ENCODE measurements at regions of chr7 and their contacts with region 1.

Region 1: GRCh38 chr7:24965831-24966709 is 13.9 kb downstream of the OSBPL3 start:
- DNase-seq: peak; percentile 98
- ATAC-seq: peak; percentile 78
- H3K4me3 ChIP-seq: peak overlapping the region; percentile 44; the same call in 1 of the 2 replicates
- H3K27ac ChIP-seq: peak overlapping the region; percentile 82
- H3K4me1 ChIP-seq: peaks cover 65% of the 10 kb centered on the region
- H3K27me3 ChIP-seq: no peaks in the 10 kb centered on the region
- CTCF ChIP-seq: no peak
- EP300 ChIP-seq: peak; percentile 93 to 97
- POLR2A ChIP-seq: no peak; the same call in 1 of the 2 replicates
- RAD21 ChIP-seq: 0 out of 2 replicates have a peak, but pooled peaks have one; percentile 15

Region 2: DNA sequence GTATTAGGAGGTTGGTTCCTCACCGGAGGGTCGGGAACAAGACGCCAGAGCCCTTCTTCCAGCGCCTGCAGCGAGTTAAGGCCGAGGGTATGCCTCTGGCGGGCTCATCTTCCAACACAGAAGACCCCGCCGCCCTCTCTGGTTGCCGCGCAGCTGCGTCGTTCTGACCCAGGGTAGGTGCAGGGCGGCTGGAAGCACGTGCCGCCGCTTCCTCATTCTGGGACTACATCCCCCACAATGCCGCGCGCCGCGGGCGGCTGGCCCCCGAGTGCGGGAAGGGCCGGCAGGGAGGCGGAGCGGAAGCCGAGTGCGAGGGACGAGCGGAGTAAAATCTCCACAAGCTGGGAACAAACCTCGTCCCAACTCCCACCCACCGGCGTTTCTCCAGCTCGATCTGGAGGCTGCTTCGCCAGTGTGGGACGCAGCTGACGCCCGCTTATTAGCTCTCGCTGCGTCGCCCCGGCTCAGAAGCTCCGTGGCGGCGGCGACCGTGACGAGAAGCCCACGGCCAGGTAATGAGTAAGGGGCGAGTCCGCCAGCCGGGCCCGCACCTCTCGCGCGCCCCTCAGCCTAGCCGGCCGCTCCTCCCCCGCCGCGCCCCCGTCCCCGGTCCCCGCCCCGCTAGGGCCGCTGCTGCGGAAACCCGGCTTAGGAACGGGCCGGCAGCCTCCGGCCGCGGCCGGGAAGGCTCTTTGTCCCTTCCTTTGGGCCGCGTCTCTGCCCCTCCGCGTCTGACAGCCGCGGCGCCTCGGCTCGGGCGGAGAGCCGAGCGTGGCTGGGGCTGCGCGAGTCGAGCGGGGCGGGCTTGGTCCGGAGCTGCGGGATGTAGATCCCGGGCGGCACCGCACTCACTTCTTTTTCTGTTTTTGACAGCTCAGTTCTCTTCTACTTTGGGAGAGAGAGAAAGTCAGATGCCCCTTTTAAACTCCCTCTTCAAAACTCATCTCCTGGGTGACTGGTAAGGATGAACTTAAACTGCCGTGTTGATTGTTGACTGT is 1368.7 kb before region 1 on chr7 and contains the start of gene CCDC126:
- CTCF ChIA-PET with region 1: no interaction called
- POLR2A ChIA-PET with region 1: no interaction called
- RAD21 ChIA-PET with region 1: no interaction called
- SMC1A ChIA-PET with region 1: no interaction called
- in situ Hi-C with region 1: no loop called
- intact Hi-C with region 1: loop called (anchors 10 kb)
- DNase-seq: peak; percentile 57
- ATAC-seq: peak; percentile 77
- H3K4me3 ChIP-seq: peak within 1 kb of the TSS; percentile 76
- H3K27ac ChIP-seq: peak within 1 kb of the TSS; percentile 92
- H3K4me1 ChIP-seq: peaks cover 32% of the 10 kb centered on the region
- H3K27me3 ChIP-seq: no peaks in the 10 kb centered on the region
- CTCF ChIP-seq: no peak
- EP300 ChIP-seq: no peak
- POLR2A ChIP-seq: peak; percentile 74
- RAD21 ChIP-seq: no peak
- polyA plus RNA-seq, gene CCDC126: 34.3 to 49.9 TPM

Region 3: DNA sequence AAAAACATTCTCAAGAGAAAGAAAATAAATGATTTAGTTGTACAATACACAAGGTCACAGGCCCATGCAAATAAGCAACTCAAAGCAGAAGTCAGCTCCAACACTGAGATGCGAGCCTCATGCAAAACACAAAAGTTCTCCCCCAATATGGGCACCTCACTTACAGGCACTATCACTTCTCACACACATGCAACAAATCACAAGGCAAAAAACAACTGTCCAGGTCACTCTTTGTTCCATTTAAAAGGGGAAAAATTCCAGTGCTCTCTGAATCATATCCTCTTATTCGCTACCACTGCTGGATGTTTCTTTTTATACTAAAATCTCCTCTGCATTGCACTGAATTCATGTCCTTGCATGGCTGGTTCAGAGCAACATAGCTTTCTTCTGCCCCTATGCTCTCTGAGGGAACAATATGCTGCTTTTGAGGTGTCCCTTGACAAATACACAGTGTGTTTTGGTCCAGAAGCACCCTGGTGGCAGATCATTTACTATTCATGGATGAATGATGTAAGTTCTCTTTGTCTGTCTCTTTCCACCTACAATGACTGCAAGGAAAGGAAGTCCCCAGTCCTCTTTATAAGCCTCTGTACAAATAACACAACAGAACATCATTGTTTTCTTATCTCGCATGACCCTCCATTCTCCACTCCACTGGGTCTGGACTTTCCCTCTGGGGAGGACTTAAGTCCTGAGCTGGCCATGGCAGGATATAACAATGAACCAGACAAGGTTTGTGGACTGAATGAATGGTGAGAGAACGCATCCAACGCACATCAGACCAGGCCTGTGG is 123.4 kb before region 1 on chr7:
- CTCF ChIA-PET with region 1: interaction called, 3 read pairs
- POLR2A ChIA-PET with region 1: interaction called, 9 read pairs
- RAD21 ChIA-PET with region 1: interaction called, 8 read pairs
- SMC1A ChIA-PET with region 1: interaction called, 9 read pairs
- in situ Hi-C with region 1: no loop called
- intact Hi-C with region 1: loop called (anchors 2 kb)
- DNase-seq: no peak
- ATAC-seq: peak; percentile 86
- H3K4me3 ChIP-seq: no peak overlapping the region
- H3K27ac ChIP-seq: peak overlapping the region; percentile 64; the same call in 1 of the 2 replicates
- H3K4me1 ChIP-seq: peaks cover 20% of the 10 kb centered on the region
- H3K27me3 ChIP-seq: no peaks in the 10 kb centered on the region
- CTCF ChIP-seq: no peak
- EP300 ChIP-seq: peak; percentile 37 to 72; a peak in 2 of 4 replicates
- POLR2A ChIP-seq: no peak
- RAD21 ChIP-seq: no peak

Region 4: GRCh38 chr7:24896031-24896501 is 70.0 kb before region 1 on chr7:
- CTCF ChIA-PET with region 1: interaction called, 6 read pairs
- POLR2A ChIA-PET with region 1: interaction called, 4 read pairs
- RAD21 ChIA-PET with region 1: interaction called, 14 read pairs
- SMC1A ChIA-PET with region 1: interaction called, 56 read pairs
- in situ Hi-C with region 1: no loop called
- intact Hi-C with region 1: loop called (anchors 1 kb)
- DNase-seq: peak; percentile 52
- ATAC-seq: peak; percentile 70
- H3K4me3 ChIP-seq: no peak overlapping the region
- H3K27ac ChIP-seq: peak overlapping the region; percentile 75
- H3K4me1 ChIP-seq: peaks cover 57% of the 10 kb centered on the region
- H3K27me3 ChIP-seq: no peaks in the 10 kb centered on the region
- CTCF ChIP-seq: peak in 1 of 3 experiments; percentile 45; a peak in 2 of 6 replicates
- EP300 ChIP-seq: peak; percentile 55 to 79; a peak in 3 of 4 replicates
- POLR2A ChIP-seq: no peak
- RAD21 ChIP-seq: peak; percentile 40; the same call in 1 of the 2 replicates

Region 5: DNA sequence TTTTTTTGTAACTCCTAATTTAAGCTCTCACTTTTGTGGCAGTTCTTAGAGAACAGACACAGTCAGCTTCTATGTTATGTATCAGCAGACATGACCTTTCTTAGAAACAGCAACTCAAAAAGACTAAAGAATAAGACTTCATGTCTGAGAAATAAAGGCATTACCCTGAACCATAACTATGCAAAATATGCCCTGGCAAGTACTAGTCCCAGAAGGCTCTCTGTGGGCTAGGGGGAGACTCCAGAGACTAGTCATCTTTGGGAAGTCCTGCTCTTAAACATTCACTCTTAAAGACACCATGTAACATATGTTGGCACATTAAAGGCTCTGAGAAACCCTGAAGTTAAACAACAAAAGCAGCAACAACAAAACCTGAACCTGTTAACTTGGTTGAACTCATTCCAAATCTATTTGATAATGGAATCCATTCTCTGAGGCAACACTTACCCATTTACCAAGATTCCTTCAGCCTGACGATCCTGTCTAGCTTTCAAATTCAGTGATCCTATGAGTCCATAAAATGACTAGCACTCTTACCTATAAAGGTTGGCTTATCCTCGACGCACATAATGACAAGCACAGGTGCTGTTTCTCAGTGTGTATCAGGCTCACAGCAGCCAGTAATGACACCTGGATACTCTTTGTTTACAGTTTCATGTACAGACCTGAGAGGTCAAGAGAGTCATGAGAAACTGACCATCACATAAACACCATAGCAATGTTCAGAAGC is 48.4 kb before region 1 on chr7:
- CTCF ChIA-PET with region 1: interaction called, 4 read pairs
- POLR2A ChIA-PET with region 1: interaction called, 3 read pairs
- RAD21 ChIA-PET with region 1: interaction called, 93 read pairs
- SMC1A ChIA-PET with region 1: interaction called, 66 read pairs
- in situ Hi-C with region 1: loop called (anchors 5 kb)
- intact Hi-C with region 1: loop called (anchors 1 kb)
- DNase-seq: no peak
- ATAC-seq: peak; percentile 66
- H3K4me3 ChIP-seq: peak overlapping the region; percentile 9; the same call in 1 of the 2 replicates
- H3K27ac ChIP-seq: peak overlapping the region; percentile 13
- H3K4me1 ChIP-seq: peaks cover 69% of the 10 kb centered on the region
- H3K27me3 ChIP-seq: no peaks in the 10 kb centered on the region
- CTCF ChIP-seq: no peak
- EP300 ChIP-seq: no peak
- POLR2A ChIP-seq: no peak
- RAD21 ChIP-seq: no peak